Activated naive CD4-positive, alpha-beta T cell treated with anti-CD3 and anti-CD28 coated beads for 36 hours (primary cell): ENCODE measurements at regions of chr20 and their contacts with region 1.

Region 1: GRCh38 chr20:52312132-52312729 is 120.7 kb upstream of the ZFP64 start:
- DNase-seq: peak; percentile 79
- H3K4me3 Mint-ChIP-seq: no peak overlapping the region
- H3K27ac Mint-ChIP-seq: no peak overlapping the region
- H3K4me1 Mint-ChIP-seq: peaks cover 28% of the 10 kb centered on the region
- H3K27me3 Mint-ChIP-seq: no peaks in the 10 kb centered on the region

Region 2: DNA sequence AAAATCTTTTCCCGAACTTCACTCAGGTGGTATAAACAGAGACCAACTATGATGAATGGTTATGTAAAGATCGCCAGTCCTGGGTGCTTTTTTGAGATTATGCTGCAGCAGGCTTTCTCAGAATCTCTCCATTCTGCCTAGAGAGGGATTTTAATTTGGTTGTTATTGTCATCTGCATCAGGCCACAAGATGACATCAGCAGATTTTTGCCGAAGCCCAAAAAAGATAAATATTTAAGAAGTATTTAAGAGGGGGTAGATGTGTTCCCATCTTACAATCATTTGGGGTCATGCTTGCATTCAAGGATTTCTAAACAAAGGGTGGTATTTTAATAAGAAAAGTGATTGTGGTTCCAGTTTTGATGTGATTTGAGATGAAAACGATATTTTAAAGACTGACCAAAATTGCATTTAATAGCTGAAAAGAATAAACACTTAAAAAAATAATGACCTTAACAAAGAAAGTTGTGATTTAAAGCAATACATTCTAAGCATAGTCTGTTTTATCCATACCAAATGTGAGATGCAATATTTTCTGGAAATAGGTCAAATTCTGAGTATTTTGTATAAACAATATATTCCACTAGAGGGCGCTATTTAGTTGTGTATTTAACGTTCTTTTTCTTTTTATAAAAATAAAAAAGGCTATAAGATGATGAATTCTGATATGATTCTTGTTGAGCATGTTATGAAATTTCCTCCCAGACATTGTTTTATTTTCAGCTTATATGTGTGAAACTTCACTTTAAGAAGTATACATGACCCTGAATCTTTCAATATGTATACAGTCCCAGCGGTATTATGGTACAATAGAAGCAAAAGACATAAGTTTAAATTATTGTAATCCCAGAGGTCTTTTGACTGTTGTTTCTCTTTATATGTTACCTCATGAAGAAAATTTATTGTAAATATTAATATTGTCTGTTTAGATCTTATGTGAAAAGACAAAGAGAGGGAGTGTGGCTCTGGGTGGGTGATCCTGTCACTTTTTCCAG is 69.7 kb before region 1 on chr20:
- CTCF ChIA-PET with region 1: interaction called, 8 read pairs
- intact Hi-C with region 1: loop called (anchors 1 kb)
- DNase-seq: no peak
- H3K4me3 Mint-ChIP-seq: no peak overlapping the region
- H3K27ac Mint-ChIP-seq: no peak overlapping the region
- H3K4me1 Mint-ChIP-seq: no peaks in the 10 kb centered on the region
- H3K27me3 Mint-ChIP-seq: no peaks in the 10 kb centered on the region

Region 3: DNA sequence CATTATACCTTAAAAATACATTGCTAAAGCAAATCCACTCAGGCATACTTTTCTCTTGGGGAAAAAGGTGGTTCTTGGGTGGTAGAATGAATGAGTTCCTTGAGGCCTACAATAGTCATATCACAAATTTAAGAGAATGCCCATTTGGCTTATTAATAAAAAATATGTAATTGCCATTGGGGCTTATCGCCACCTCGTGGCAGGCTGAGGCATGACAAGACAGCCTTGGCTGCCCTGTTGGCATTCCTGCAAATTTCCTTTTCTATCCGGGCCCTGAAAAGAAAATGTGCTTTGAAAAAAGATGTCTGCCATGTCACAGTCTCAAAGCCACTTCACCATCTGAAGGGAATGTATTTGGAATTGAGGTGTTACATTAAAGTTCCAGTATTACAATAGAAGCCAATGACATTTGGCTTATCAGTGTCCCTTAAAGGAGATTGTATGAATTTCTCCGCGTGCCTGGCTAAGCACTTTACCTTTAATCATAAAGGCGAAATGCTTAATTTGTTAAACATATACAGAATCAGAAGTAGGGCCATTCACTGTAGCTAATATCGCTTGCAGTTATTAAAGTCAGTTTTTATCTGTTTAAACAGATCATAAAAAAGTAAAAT is 67.6 kb after region 1 on chr20:
- CTCF ChIA-PET with region 1: interaction called, 20 read pairs
- intact Hi-C with region 1: loop called (anchors 1 kb)
- DNase-seq: peak; percentile 52
- H3K4me3 Mint-ChIP-seq: no peak overlapping the region
- H3K27ac Mint-ChIP-seq: no peak overlapping the region
- H3K4me1 Mint-ChIP-seq: peaks cover 14% of the 10 kb centered on the region
- H3K27me3 Mint-ChIP-seq: no peaks in the 10 kb centered on the region

Region 4: DNA sequence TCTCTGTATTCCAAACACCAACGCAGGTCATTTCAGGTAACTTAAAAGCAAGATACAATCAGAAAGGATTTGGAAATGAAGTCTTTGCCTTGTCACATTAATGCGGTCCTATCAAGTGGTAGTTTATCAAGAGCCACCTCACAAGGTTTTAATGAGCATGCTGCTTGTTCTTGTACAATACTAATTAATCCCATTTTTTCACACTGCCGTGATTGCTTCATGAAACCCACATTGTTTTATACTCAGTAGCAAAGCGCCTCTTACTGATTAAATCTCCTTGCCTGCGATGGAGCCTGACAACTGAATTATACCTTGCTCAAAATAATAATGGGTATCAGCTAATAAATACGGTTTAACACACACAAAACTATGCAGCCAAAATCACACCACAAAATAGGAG is 425.9 kb after region 1 on chr20:
- CTCF ChIA-PET with region 1: no interaction called
- intact Hi-C with region 1: loop called (anchors 5 kb)
- DNase-seq: no peak
- H3K4me3 Mint-ChIP-seq: no peak overlapping the region
- H3K27ac Mint-ChIP-seq: no peak overlapping the region
- H3K4me1 Mint-ChIP-seq: peaks cover 2% of the 10 kb centered on the region
- H3K27me3 Mint-ChIP-seq: peaks cover 4% of the 10 kb centered on the region

Region 5: GRCh38 chr20:53077373-53078205 is 765.4 kb after region 1 on chr20:
- CTCF ChIA-PET with region 1: no interaction called
- intact Hi-C with region 1: loop called (anchors 5 kb)
- DNase-seq: peak; percentile 59
- H3K4me3 Mint-ChIP-seq: no peak overlapping the region
- H3K27ac Mint-ChIP-seq: no peak overlapping the region
- H3K4me1 Mint-ChIP-seq: peaks cover 46% of the 10 kb centered on the region
- H3K27me3 Mint-ChIP-seq: no peaks in the 10 kb centered on the region

Region 6: DNA sequence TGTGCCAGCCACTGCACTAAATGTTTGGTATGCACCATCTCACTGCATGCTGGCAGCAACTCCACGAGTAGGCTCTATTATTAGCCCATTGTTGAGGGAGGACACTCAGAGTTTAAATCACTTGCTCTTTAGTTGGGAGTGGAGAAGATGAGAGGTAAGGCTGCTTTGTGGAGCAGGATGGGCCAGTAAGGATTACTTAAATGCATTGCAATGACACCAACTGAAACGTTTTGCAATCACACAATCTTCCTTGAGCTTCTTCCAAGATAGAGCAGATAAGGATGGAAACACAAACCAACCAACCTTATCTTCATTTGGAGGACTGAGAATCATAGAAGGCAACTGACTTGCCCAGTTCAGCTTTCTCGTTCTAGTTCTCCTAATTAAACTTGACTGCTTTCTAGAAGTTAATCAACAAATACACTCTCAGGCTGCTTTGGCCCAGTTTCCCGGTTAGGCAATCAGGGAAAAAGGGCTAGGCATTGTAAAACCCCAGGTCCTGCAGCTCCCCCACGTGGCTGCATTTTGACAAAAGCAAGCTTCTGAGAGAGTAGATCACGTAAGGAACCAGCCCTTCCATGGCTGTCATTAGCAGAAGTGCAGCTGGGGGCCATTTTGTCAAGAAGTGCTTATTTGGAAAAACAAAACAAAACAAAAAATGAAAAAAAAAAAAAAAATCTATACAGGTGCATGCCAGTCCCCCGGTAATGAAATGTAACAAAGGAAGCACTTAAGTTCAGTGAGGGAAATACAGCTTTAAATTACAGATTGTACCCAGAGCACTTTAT is 1627.5 kb after region 1 on chr20:
- CTCF ChIA-PET with region 1: no interaction called
- intact Hi-C with region 1: loop called (anchors 5 kb)
- DNase-seq: peak; percentile 92
- H3K4me3 Mint-ChIP-seq: no peak overlapping the region
- H3K27ac Mint-ChIP-seq: no peak overlapping the region
- H3K4me1 Mint-ChIP-seq: peaks cover 38% of the 10 kb centered on the region
- H3K27me3 Mint-ChIP-seq: no peaks in the 10 kb centered on the region